A549 (cell line): ENCODE measurements at regions of chr17 and their contacts with region 1.

Region 1: DNA sequence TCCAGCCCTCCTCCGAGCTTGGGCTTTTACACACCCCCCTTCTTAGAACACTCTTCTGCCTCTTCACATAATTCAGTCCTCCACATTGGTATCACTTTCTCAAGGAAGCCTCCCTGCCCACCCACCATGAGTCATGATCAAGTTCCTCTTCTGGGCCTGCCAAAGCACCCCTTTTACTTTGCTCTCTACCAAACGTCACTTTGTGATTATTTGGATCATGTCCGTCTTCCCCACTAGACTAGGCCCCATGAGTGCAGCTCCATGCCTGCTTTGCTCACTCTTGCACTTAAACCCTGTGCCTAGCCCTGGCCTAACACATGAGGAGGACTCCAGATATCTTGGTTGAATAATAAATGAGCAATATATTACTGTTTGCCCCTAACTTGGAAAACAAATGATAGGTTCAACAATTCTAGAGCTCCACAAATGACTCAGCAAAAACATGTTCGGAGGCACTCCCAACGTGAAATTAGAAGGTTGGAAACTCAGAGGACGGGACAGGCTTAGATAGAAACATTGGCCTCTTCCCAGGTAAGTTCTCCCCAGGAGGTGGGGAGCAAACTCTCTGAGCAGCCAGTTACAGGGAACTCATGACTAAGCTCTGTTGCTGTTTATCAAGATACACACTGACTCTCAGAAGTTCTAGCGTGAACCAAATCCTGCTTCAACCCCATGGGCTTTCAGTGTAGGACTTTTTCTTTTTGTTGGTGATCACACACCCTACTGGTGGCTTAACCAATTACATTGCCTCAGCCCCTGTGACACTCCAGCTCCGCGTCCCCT is 28.3 kb downstream of the G6PC1 start:
- DNase-seq: peak; percentile 93 to 95
- ATAC-seq: peak; percentile 96 to 97
- H3K4me3 ChIP-seq: no peak overlapping the region
- H3K27ac ChIP-seq: peak overlapping the region; percentile 75 to 84
- H3K4me1 ChIP-seq: peaks cover 9% of the 10 kb centered on the region
- CTCF ChIP-seq: peak; percentile 74
- EP300 ChIP-seq: no peak
- POLR2A ChIP-seq: no peak
- RAD21 ChIP-seq: peak; percentile 82 to 84

Region 2: GRCh38 chr17:42798383-42799380 is 130.2 kb before region 1 on chr17 and contains the starts of genes CNTD1 and COA3:
- CTCF ChIA-PET with region 1: no interaction called
- POLR2A ChIA-PET with region 1: no interaction called
- DNase-seq: peak; percentile 92 to 96
- ATAC-seq: peak; percentile 97 to 99
- H3K4me3 ChIP-seq: peak within 1 kb of the TSS; percentile 72
- H3K27ac ChIP-seq: peak within 1 kb of the TSS; percentile 83 to 92
- H3K4me1 ChIP-seq: peaks cover 38% of the 10 kb centered on the region
- CTCF ChIP-seq: no peak
- EP300 ChIP-seq: no peak
- POLR2A ChIP-seq: peak; percentile 81
- RAD21 ChIP-seq: no peak
- polyA plus RNA-seq, gene CNTD1: 0.06 and 0.07 TPM in 2 replicates
- polyA plus RNA-seq, gene COA3: 126 and 170 TPM in 2 replicates

Region 3: DNA sequence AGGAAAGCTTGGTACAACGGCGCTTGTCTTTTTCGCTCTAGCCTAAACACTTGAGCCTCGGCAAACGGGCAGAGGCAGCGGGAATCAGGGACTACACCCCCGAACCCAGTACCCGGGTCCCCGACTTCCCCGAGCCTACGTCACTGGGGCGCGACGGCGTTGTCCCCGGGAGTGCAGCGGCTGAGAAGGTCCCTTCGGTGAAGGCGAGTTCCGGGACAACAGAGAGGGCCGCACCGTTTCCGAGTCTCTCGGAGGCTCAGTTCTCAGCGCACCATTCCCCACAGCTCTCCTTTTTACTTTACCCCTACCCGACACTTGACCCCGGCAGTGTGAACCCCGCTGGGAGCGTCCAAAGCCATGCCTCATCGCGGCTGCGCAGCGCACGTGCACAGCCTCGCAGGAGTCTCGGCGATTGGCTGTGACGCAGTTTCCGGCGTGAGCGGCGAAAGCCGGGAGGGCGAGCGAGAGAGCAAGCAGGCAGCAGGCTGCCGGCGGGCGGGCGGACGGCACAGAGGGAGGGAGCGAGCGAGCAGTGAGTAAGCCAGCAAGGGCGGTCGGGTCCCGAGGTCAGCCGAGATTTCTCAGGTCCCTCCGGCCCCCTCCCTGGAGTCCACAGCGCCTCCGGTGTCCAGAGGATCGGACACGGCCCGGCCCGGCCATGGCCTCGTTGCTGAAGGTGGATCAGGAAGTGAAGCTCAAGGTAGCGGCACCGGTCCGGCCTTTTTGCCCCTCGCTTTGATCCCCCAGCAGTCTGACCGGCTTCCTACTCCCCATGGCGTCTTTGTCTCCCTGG is 95.7 kb before region 1 on chr17 and contains the start of gene PSME3:
- CTCF ChIA-PET with region 1: interaction called, 372 read pairs
- POLR2A ChIA-PET with region 1: no interaction called
- DNase-seq: peak; percentile 92 to 96
- ATAC-seq: peak; percentile 96 to 97
- H3K4me3 ChIP-seq: peak within 1 kb of the TSS; percentile 94
- H3K27ac ChIP-seq: peak within 1 kb of the TSS; percentile 95 to 96
- H3K4me1 ChIP-seq: peaks cover 22% of the 10 kb centered on the region
- CTCF ChIP-seq: no peak
- EP300 ChIP-seq: no peak
- POLR2A ChIP-seq: peak; percentile 98
- RAD21 ChIP-seq: no peak; a peak in 1 of 5 replicates
- polyA plus RNA-seq, gene PSME3: 220 and 257 TPM in 2 replicates

Region 4: GRCh38 chr17:42895185-42895555 is 33.7 kb before region 1 on chr17:
- CTCF ChIA-PET with region 1: interaction called, 17 read pairs
- POLR2A ChIA-PET with region 1: no interaction called
- DNase-seq: peak; percentile 78 to 86
- ATAC-seq: peak; percentile 93 to 96
- H3K4me3 ChIP-seq: no peak overlapping the region
- H3K27ac ChIP-seq: peak overlapping the region; percentile 68 to 78
- H3K4me1 ChIP-seq: peaks cover 27% of the 10 kb centered on the region
- CTCF ChIP-seq: no peak
- EP300 ChIP-seq: no peak
- POLR2A ChIP-seq: no peak
- RAD21 ChIP-seq: no peak

Region 5: DNA sequence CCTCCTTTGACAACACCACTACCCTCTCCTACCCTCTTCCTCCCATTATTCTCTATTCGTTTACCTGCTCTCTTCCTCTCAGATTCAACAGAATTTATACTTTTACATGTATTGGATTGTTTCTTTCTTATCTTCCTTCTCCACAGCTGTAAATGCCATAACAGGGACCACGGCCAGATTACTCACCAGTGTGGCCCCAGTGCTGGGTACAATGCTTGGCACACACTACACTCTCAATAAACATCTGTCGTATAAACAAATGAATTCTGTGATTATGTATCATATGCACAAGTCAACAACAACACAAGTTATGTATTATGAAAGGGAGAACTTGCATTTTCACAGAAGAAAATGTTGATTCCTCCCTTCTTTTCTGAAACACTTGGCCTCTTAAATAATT is 15.3 kb after region 1 on chr17:
- CTCF ChIA-PET with region 1: interaction called, 35 read pairs
- POLR2A ChIA-PET with region 1: no interaction called
- DNase-seq: no peak
- ATAC-seq: no peak
- H3K4me3 ChIP-seq: no peak overlapping the region
- H3K27ac ChIP-seq: no peak overlapping the region
- H3K4me1 ChIP-seq: no peaks in the 10 kb centered on the region
- CTCF ChIP-seq: no peak
- EP300 ChIP-seq: no peak
- POLR2A ChIP-seq: no peak
- RAD21 ChIP-seq: no peak

Region 6: GRCh38 chr17:43062984-43063638 is 134.2 kb after region 1 on chr17:
- CTCF ChIA-PET with region 1: no interaction called
- POLR2A ChIA-PET with region 1: no interaction called
- DNase-seq: no peak
- ATAC-seq: no peak
- H3K4me3 ChIP-seq: no peak overlapping the region
- H3K27ac ChIP-seq: no peak overlapping the region
- H3K4me1 ChIP-seq: no peaks in the 10 kb centered on the region
- CTCF ChIP-seq: no peak
- EP300 ChIP-seq: no peak
- POLR2A ChIP-seq: no peak
- RAD21 ChIP-seq: no peak